ENCODE measurements at regions of chr15 and their contacts with region 1.

Region 1: DNA sequence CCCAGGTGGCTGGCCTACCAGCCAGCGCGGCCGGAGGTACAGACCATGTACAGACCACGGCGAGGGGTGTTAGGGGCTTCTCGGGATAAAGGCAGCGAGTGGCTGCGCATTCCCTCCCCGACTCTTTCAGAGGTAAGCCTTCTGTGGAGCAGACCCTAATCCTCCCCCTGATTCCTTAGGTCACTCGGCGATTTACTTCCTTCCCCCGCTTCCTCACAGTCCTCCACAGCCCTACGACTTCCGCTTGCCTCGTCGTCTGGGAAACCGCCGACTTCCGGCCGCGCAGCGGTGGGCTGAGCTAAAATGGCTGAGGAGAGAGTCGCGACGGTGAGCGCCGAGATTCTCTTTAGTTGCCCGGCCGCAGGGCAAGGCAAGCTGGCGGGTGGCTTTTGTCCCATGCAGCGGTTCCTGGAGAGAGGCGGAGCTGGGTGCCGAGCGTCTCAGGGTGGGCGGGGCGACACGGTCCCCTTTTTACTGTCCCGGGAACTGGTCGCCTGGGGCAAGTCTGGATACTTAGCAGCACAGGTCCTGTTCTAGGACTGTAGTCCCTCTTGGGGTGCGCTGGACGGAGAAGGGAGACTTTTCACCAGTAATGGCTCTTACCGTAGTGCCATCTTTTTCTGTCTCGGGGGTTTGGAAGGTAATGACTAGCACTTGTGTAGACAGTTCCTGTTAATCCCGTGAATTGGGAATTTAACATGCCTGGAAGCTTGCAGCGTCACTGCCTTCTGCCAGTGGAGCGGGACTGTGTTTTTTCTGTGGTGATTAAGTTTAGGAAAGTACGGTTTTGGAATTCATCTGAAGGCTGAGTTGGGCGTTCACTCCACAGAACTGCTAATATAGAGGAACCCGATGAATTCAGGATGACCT is at the starts of genes BBS4 and HIGD2B:
- DNase-seq: peak; percentile 91
- ATAC-seq: peak; percentile 94
- H3K4me3 ChIP-seq: peak within 1 kb of the TSS; percentile 70 to 98 (median 88)
- H3K4me3 Mint-ChIP-seq: peak within 1 kb of the TSS; percentile 97
- H3K27ac ChIP-seq: peak within 1 kb of the TSS; percentile 77 to 91
- H3K27ac Mint-ChIP-seq: peak within 1 kb of the TSS; percentile 94
- H3K4me1 ChIP-seq: peaks cover 11 to 12% of the 10 kb centered on the region in 2 donors
- H3K4me1 Mint-ChIP-seq: peaks cover 25% of the 10 kb centered on the region
- H3K27me3 ChIP-seq: no peaks in the 10 kb centered on the region
- H3K27me3 Mint-ChIP-seq: no peaks in the 10 kb centered on the region
- CTCF ChIP-seq: no peak
- total RNA-seq, gene BBS4: 25.7 and 34.9 TPM in 2 replicates
- total RNA-seq, gene HIGD2B: 0.52 and 1.4 TPM in 2 replicates

Region 2: DNA sequence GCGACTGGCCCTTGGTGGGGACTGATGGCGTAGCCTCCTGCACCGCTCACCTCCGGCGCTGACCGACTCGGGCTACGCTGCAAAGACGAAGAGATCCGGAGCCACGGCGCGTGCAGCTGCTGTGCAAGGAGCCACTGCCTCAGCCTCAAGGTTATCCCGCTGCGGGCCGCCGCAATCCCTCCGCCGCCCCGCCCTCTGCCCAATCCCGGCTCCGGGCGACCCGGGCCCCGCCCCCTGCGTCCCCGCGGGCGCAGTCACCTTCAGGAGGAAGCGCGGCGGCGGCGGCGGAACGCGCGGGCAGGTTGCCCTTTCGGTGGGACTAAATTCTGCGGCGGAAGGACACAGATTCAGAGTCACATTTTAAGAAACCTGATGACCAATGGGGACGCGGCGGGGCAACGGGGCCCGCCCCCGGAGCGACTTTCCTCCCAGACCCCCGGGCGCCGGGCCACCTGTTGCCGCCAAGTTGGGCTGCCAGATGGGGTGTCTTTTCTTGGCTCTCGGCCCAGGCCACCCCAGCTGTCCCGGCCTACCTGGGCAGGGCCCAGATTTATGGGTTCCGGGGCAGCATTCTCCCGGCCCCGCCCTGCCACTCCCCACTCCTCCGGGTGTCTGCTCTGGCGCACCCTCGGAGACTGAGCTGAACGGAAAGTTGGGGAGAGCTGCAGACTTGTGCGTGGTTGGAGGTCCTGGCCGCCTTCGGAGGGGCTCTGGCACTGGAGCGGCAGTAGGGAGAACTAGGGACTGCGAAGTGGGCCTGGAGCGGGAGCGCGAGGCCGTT is 454.9 kb before region 1 on chr15 and contains the start of gene PKM:
- CTCF ChIA-PET with region 1: no interaction called
- POLR2A ChIA-PET with region 1: no interaction called
- intact Hi-C with region 1: loop called (anchors 1 kb)
- DNase-seq: peak; percentile 96
- ATAC-seq: peak; percentile 52
- H3K4me3 ChIP-seq: peak within 1 kb of the TSS; percentile 77 to 96 (median 93)
- H3K4me3 Mint-ChIP-seq: peak within 1 kb of the TSS; percentile 94
- H3K27ac ChIP-seq: peak within 1 kb of the TSS; percentile 91 to 94
- H3K27ac Mint-ChIP-seq: peak within 1 kb of the TSS; percentile 97
- H3K4me1 ChIP-seq: peaks cover 37 to 44% of the 10 kb centered on the region in 2 donors
- H3K4me1 Mint-ChIP-seq: peaks cover 38% of the 10 kb centered on the region
- H3K27me3 ChIP-seq: no peaks in the 10 kb centered on the region
- H3K27me3 Mint-ChIP-seq: no peaks in the 10 kb centered on the region
- CTCF ChIP-seq: no peak
- total RNA-seq, gene PKM: 306 and 323 TPM in 2 replicates

Region 3: GRCh38 chr15:72375847-72376581 is 310.1 kb before region 1 on chr15 and contains the start of gene HEXA:
- CTCF ChIA-PET with region 1: no interaction called
- POLR2A ChIA-PET with region 1: no interaction called
- intact Hi-C with region 1: loop called (anchors 2 kb)
- DNase-seq: peak; percentile 98
- ATAC-seq: peak; percentile 85
- H3K4me3 ChIP-seq: peak within 1 kb of the TSS; percentile 72 to 92 (median 85)
- H3K4me3 Mint-ChIP-seq: peak within 1 kb of the TSS; percentile 98
- H3K27ac ChIP-seq: peak within 1 kb of the TSS; percentile 85 to 95
- H3K27ac Mint-ChIP-seq: peak within 1 kb of the TSS; percentile 100
- H3K4me1 ChIP-seq: peaks cover 44 to 46% of the 10 kb centered on the region in 2 donors
- H3K4me1 Mint-ChIP-seq: peaks cover 54% of the 10 kb centered on the region
- H3K27me3 ChIP-seq: no peaks in the 10 kb centered on the region
- H3K27me3 Mint-ChIP-seq: no peaks in the 10 kb centered on the region
- CTCF ChIP-seq: no peak
- total RNA-seq, gene HEXA: 151 and 154 TPM in 2 replicates

Region 4: DNA sequence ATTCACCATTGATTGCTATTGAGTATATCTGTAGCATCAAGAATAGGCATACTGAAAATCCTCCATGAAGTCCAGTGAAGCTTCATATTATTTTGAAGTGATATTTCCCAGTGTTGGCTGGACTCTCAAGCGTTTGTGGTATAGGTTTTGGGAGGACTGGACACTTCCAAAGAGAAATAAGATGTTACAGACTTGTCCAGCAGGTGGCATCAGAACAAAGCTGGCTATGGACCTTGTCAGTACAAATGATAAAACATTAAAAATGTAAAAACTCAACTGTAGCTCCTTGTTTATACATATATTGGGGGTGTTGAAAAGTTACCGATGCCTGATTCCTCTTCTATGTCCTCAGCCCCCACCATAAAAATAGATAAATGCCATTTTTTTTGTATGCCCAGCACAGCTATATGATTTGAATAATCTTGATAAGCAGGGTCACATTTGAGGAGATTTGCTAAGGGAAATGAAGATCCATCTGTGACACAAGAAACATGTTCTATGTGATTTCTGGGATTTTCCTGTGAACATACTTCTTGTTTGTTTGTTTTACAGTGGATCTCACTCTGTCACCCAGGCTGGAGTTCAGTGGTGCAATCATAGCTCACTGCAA is 86.2 kb before region 1 on chr15:
- CTCF ChIA-PET with region 1: no interaction called
- POLR2A ChIA-PET with region 1: no interaction called
- intact Hi-C with region 1: loop called (anchors 5 kb)
- DNase-seq: peak; percentile 40
- ATAC-seq: no peak
- H3K4me3 ChIP-seq: no peak overlapping the region
- H3K4me3 Mint-ChIP-seq: no peak overlapping the region
- H3K27ac ChIP-seq: no peak overlapping the region
- H3K27ac Mint-ChIP-seq: no peak overlapping the region
- H3K4me1 ChIP-seq: no peaks in the 10 kb centered on the region
- H3K4me1 Mint-ChIP-seq: no peaks in the 10 kb centered on the region
- H3K27me3 ChIP-seq: no peaks in the 10 kb centered on the region
- H3K27me3 Mint-ChIP-seq: peaks cover 5% of the 10 kb centered on the region
- CTCF ChIP-seq: peak; percentile 79

Region 5: GRCh38 chr15:72758182-72758581 is 72.0 kb after region 1 on chr15:
- CTCF ChIA-PET with region 1: no interaction called
- POLR2A ChIA-PET with region 1: no interaction called
- intact Hi-C with region 1: no loop called
- DNase-seq: no peak
- ATAC-seq: no peak
- H3K4me3 ChIP-seq: no peak overlapping the region
- H3K4me3 Mint-ChIP-seq: no peak overlapping the region
- H3K27ac ChIP-seq: no peak overlapping the region
- H3K27ac Mint-ChIP-seq: no peak overlapping the region
- H3K4me1 ChIP-seq: no peaks in the 10 kb centered on the region
- H3K4me1 Mint-ChIP-seq: peaks cover 2% of the 10 kb centered on the region
- H3K27me3 ChIP-seq: no peaks in the 10 kb centered on the region
- H3K27me3 Mint-ChIP-seq: no peaks in the 10 kb centered on the region
- CTCF ChIP-seq: no peak

Measured in B cell (primary cell).